Activated CD4-positive, alpha-beta memory T cell treated with anti-CD3 and anti-CD28 coated beads for 36 hours (primary cell): ENCODE measurements at regions of chr17 and their contacts with region 1.

Region 1: DNA sequence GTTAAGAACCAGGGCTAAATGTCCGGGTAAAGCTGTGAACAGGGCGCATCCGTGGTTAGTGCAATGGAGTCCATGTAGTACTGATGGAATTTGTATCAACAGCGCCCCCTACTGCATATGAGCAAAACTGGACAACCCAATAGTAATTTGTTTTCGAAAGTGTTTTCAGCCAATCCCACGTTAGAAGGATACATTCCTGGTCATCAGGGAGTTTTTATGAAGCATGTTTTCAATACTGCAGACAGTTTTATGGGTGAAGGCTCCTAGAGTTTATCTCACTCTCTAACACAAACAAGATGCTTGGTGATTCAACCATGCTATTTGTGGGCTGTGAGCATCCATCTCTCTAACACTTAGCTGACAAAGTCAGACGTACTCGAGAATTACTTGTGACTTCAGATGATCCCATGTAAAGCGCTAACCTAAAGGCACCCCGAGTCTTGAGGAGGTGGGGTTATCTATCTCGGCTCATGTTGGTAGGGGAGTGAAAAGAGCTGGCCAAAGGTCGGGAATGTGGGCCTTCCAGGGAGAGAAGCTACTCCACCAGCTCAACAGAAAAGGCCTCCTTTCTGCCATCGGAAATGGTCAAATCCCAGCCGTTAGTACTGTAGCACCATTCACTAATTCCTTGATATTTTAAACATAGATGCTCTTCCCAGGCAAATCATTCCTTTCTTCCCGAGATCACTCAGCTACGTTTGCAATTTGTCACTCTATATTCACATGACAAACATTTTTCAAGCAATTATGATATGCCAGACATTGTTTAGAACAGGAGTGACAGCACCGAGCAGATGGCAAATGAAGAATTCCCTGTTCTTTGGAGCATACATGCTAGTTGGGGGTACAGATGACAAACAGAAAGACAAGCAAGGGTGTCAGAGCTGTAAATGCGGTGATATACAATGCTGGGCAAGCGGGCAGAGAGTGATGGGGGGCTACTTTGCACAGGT is 46.9 kb upstream of the HNF1B start:
- DNase-seq: peak; percentile 66
- H3K4me3 Mint-ChIP-seq: no peak overlapping the region
- H3K27ac Mint-ChIP-seq: no peak overlapping the region
- H3K4me1 Mint-ChIP-seq: no peaks in the 10 kb centered on the region
- H3K27me3 Mint-ChIP-seq: peaks cover 19% of the 10 kb centered on the region

Region 2: GRCh38 chr17:37527249-37527851 is 264.4 kb before region 1 on chr17:
- CTCF ChIA-PET with region 1: interaction called, 31 read pairs
- POLR2A ChIA-PET with region 1: no interaction called
- intact Hi-C with region 1: loop called (anchors 1 kb)
- DNase-seq: peak; percentile 20
- H3K4me3 Mint-ChIP-seq: no peak overlapping the region
- H3K27ac Mint-ChIP-seq: no peak overlapping the region
- H3K4me1 Mint-ChIP-seq: no peaks in the 10 kb centered on the region
- H3K27me3 Mint-ChIP-seq: no peaks in the 10 kb centered on the region

Region 3: GRCh38 chr17:37650419-37651003 is 141.2 kb before region 1 on chr17:
- CTCF ChIA-PET with region 1: interaction called, 10 read pairs
- POLR2A ChIA-PET with region 1: no interaction called
- intact Hi-C with region 1: no loop called
- DNase-seq: no peak
- H3K4me3 Mint-ChIP-seq: no peak overlapping the region
- H3K27ac Mint-ChIP-seq: no peak overlapping the region
- H3K4me1 Mint-ChIP-seq: no peaks in the 10 kb centered on the region
- H3K27me3 Mint-ChIP-seq: peaks cover 28% of the 10 kb centered on the region

Region 4: DNA sequence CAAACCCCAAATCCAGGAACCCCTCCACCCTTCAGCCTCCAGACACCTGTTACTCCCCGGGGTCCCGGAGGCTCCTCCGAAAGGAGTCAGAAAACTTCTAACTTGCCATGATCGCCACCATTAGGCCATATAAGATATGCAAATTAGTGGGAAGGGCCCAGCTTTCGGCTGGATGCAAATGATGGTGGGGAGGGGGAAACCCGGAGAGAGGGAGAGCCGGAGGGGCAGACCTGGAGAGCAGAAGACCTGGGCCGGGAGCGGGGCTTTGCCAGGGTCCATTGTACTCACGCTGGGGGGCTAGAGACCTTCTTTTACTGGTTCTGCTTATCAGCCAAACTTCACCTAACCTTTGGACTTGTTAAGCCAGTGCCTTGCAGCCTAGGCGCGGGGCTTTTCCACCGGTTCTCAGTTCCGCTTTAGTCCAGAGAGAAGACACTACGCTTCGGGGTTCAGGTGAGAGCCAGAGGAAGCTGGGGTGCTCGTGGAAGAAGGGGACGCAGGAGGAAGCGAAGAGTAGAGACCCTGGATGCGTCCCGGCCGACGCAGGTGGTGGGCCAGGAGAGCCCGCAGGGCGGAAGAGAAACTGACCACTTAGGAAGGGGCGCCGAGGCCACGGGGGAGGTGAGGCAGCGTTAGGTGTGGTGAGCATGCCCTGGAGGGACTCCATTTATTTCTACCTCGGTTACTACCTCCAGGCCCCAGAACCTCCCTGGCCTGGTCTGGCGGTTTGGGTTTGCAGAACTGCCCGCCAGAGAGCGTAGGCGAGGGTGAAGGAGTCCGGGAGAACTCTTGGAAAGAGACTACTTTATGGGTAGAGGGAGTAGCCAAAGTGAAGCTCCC is 46.5 kb before region 1 on chr17 and contains the start of gene HNF1B:
- CTCF ChIA-PET with region 1: interaction called, 3 read pairs
- POLR2A ChIA-PET with region 1: no interaction called
- intact Hi-C with region 1: loop called (anchors 5 kb)
- DNase-seq: peak; percentile 38
- H3K4me3 Mint-ChIP-seq: peak within 1 kb of the TSS; percentile 23
- H3K27ac Mint-ChIP-seq: no peak within 1 kb of the TSS
- H3K4me1 Mint-ChIP-seq: peaks cover 19% of the 10 kb centered on the region
- H3K27me3 Mint-ChIP-seq: peaks cover 58% of the 10 kb centered on the region
- total RNA-seq, gene HNF1B: not detected

Region 5: GRCh38 chr17:37779554-37779953 is 12.2 kb before region 1 on chr17:
- CTCF ChIA-PET with region 1: interaction called, 14 read pairs
- POLR2A ChIA-PET with region 1: no interaction called
- intact Hi-C with region 1: no loop called
- DNase-seq: no peak
- H3K4me3 Mint-ChIP-seq: no peak overlapping the region
- H3K27ac Mint-ChIP-seq: no peak overlapping the region
- H3K4me1 Mint-ChIP-seq: peaks cover 8% of the 10 kb centered on the region
- H3K27me3 Mint-ChIP-seq: peaks cover 6% of the 10 kb centered on the region

Region 6: DNA sequence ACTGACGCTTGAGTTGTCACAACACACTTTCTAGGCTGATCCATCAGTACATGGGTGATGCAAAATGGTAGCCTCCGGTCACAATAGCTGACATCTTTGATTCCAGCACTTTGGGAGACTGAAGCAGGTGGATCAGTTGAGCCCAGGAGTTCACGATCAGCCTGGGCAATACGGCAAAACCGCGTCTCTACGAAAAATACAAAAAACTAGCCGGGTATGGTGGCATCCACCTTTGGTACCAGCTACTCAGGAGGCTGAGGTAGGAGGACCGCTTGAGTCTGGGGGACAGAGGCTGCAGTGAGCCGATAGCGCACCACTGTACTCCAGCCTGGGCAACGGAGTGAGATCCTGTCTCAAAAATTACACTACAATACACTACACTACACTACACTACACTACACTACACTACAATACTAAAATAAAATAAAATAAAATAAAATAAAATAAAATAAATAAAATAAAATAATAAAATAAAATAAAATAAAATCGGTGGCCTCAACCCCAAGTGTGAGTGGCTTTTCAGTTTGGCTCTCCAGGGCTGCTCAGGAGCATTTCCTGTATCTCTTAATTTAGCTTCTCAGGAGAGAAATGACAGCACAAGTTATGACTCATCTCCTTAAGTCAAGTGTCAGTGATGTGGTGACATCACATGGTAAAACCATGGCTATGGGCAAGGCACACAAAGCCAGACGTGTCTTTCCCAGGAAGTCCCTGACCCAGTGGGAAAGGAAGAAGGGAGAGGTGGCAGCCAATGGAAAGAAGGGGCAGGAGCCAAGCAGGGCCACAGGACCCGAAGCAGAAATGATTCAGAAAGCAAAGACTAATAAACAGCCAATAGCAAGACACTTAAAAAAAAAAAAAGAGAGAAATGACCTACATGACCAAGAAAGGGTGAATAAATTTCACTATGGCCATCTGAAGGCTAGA is 57.2 kb after region 1 on chr17:
- CTCF ChIA-PET with region 1: no interaction called
- POLR2A ChIA-PET with region 1: no interaction called
- intact Hi-C with region 1: no loop called
- DNase-seq: peak; percentile 48
- H3K4me3 Mint-ChIP-seq: no peak overlapping the region
- H3K27ac Mint-ChIP-seq: no peak overlapping the region
- H3K4me1 Mint-ChIP-seq: peaks cover 14% of the 10 kb centered on the region
- H3K27me3 Mint-ChIP-seq: peaks cover 7% of the 10 kb centered on the region